OCI-LY7 (cell line): ENCODE measurements at regions of chr10 and their contacts with region 1.

Region 1: GRCh38 chr10:67779465-67780203 is 58.4 kb downstream of the DNAJC12 start:
- DNase-seq: peak; percentile 91
- H3K4me3 ChIP-seq: no peak overlapping the region
- H3K27ac ChIP-seq: peak overlapping the region; percentile 85
- H3K4me1 ChIP-seq: peaks cover 64% of the 10 kb centered on the region
- CTCF ChIP-seq: peak; percentile 88

Region 2: GRCh38 chr10:66931340-66931948 is 848.2 kb before region 1 on chr10:
- CTCF ChIA-PET with region 1: no interaction called
- POLR2A ChIA-PET with region 1: no interaction called
- intact Hi-C with region 1: loop called (anchors 2 kb)
- DNase-seq: peak; percentile 57
- H3K4me3 ChIP-seq: no peak overlapping the region
- H3K27ac ChIP-seq: no peak overlapping the region
- H3K4me1 ChIP-seq: no peaks in the 10 kb centered on the region
- CTCF ChIP-seq: peak; percentile 96

Region 3: GRCh38 chr10:67520924-67521520 is 258.6 kb before region 1 on chr10:
- CTCF ChIA-PET with region 1: no interaction called
- POLR2A ChIA-PET with region 1: no interaction called
- intact Hi-C with region 1: loop called (anchors 2 kb)
- DNase-seq: peak; percentile 52
- H3K4me3 ChIP-seq: no peak overlapping the region
- H3K27ac ChIP-seq: no peak overlapping the region
- H3K4me1 ChIP-seq: no peaks in the 10 kb centered on the region
- CTCF ChIP-seq: peak; percentile 95

Region 4: GRCh38 chr10:67697724-67698131 is 81.9 kb before region 1 on chr10:
- CTCF ChIA-PET with region 1: interaction called, 44 read pairs
- POLR2A ChIA-PET with region 1: interaction called, 46 read pairs
- intact Hi-C with region 1: loop called (anchors 1 kb)
- DNase-seq: peak; percentile 75
- H3K4me3 ChIP-seq: no peak overlapping the region
- H3K27ac ChIP-seq: no peak overlapping the region
- H3K4me1 ChIP-seq: peaks cover 23% of the 10 kb centered on the region
- CTCF ChIP-seq: peak; percentile 90

Region 5: GRCh38 chr10:67849331-67850011 is 69.8 kb after region 1 on chr10:
- CTCF ChIA-PET with region 1: no interaction called
- POLR2A ChIA-PET with region 1: interaction called, 3 read pairs
- intact Hi-C with region 1: loop called (anchors 5 kb)
- DNase-seq: peak; percentile 92
- H3K4me3 ChIP-seq: peak overlapping the region; percentile 92
- H3K27ac ChIP-seq: peak overlapping the region; percentile 52
- H3K4me1 ChIP-seq: peaks cover 4% of the 10 kb centered on the region
- CTCF ChIP-seq: no peak